ENCODE measurements at regions of chr11 and their contacts with region 1.

Region 1: GRCh38 chr11:115334932-115335788 is 169.1 kb downstream of the CADM1 start:
- DNase-seq: peak; percentile 52
- ATAC-seq: peak; percentile 57
- H3K4me3 ChIP-seq: no peak overlapping the region
- H3K27ac ChIP-seq: no peak overlapping the region
- H3K4me1 ChIP-seq: no peaks in the 10 kb centered on the region
- H3K27me3 ChIP-seq: no peaks in the 10 kb centered on the region
- CTCF ChIP-seq: peak; percentile 73
- POLR2A ChIP-seq: no peak
- RAD21 ChIP-seq: peak; percentile 76

Region 2: GRCh38 chr11:115300660-115301428 is 34.3 kb before region 1 on chr11:
- CTCF ChIA-PET with region 1: no interaction called
- POLR2A ChIA-PET with region 1: no interaction called
- dilution Hi-C with region 1: no loop called
- in situ Hi-C with region 1: no loop called
- intact Hi-C with region 1: no loop called
- DNase-seq: peak; percentile 73
- ATAC-seq: peak; percentile 90
- H3K4me3 ChIP-seq: no peak overlapping the region
- H3K27ac ChIP-seq: no peak overlapping the region
- H3K4me1 ChIP-seq: peaks cover 2% of the 10 kb centered on the region; the same call in 1 of the 2 replicates
- H3K27me3 ChIP-seq: no peaks in the 10 kb centered on the region
- CTCF ChIP-seq: no peak
- POLR2A ChIP-seq: no peak
- RAD21 ChIP-seq: no peak; the same call in 1 of the 2 replicates

Region 3: DNA sequence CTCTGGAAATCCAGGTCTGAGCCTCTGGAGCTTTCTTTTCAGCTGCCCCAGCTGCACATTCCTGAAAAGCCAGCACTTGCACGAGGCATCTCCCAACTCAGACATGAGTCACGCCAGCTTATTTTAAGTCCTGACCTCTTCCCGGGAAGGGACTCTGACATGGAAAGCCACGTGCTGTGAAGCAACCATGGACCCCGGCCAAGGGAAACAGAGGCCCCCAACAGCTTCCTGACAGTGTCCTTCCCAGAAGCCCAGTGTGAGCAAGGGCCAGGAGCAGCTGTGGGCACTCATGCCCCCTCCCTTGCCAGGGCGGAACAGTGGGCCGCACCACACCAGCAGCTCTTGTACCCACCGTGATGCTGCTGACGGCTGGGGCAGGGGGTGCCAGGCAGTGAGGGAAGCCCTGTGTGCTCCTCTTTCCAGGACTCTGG is 287.9 kb after region 1 on chr11:
- CTCF ChIA-PET with region 1: no interaction called
- POLR2A ChIA-PET with region 1: no interaction called
- dilution Hi-C with region 1: no loop called
- in situ Hi-C with region 1: no loop called
- intact Hi-C with region 1: loop called (anchors 5 kb)
- DNase-seq: peak; percentile 100
- ATAC-seq: peak; percentile 87
- H3K4me3 ChIP-seq: no peak overlapping the region
- H3K27ac ChIP-seq: peak overlapping the region; percentile 66
- H3K4me1 ChIP-seq: peaks cover 17% of the 10 kb centered on the region
- H3K27me3 ChIP-seq: peaks cover 3% of the 10 kb centered on the region
- CTCF ChIP-seq: no peak
- POLR2A ChIP-seq: no peak
- RAD21 ChIP-seq: 0 out of 2 replicates have a peak, but pooled peaks have one; percentile 23

Region 4: GRCh38 chr11:115672999-115673411 is 337.8 kb after region 1 on chr11:
- CTCF ChIA-PET with region 1: no interaction called
- POLR2A ChIA-PET with region 1: no interaction called
- dilution Hi-C with region 1: no loop called
- in situ Hi-C with region 1: no loop called
- intact Hi-C with region 1: loop called (anchors 10 kb)
- DNase-seq: peak; percentile 73
- ATAC-seq: peak; percentile 34; the same call in 1 of the 2 replicates
- H3K4me3 ChIP-seq: no peak overlapping the region
- H3K27ac ChIP-seq: no peak overlapping the region
- H3K4me1 ChIP-seq: peaks cover 21% of the 10 kb centered on the region
- H3K27me3 ChIP-seq: no peaks in the 10 kb centered on the region
- CTCF ChIP-seq: no peak
- POLR2A ChIP-seq: no peak
- RAD21 ChIP-seq: no peak

Region 5: GRCh38 chr11:115869780-115870431 is 534.7 kb after region 1 on chr11:
- CTCF ChIA-PET with region 1: no interaction called
- POLR2A ChIA-PET with region 1: no interaction called
- dilution Hi-C with region 1: no loop called
- in situ Hi-C with region 1: no loop called
- intact Hi-C with region 1: loop called (anchors 10 kb)
- DNase-seq: peak; percentile 51
- ATAC-seq: peak; percentile 94
- H3K4me3 ChIP-seq: no peak overlapping the region
- H3K27ac ChIP-seq: no peak overlapping the region
- H3K4me1 ChIP-seq: no peaks in the 10 kb centered on the region; the same call in 1 of the 2 replicates
- H3K27me3 ChIP-seq: no peaks in the 10 kb centered on the region; the same call in 1 of the 2 replicates
- CTCF ChIP-seq: peak; percentile 61
- POLR2A ChIP-seq: no peak
- RAD21 ChIP-seq: peak; percentile 73

Region 6: DNA sequence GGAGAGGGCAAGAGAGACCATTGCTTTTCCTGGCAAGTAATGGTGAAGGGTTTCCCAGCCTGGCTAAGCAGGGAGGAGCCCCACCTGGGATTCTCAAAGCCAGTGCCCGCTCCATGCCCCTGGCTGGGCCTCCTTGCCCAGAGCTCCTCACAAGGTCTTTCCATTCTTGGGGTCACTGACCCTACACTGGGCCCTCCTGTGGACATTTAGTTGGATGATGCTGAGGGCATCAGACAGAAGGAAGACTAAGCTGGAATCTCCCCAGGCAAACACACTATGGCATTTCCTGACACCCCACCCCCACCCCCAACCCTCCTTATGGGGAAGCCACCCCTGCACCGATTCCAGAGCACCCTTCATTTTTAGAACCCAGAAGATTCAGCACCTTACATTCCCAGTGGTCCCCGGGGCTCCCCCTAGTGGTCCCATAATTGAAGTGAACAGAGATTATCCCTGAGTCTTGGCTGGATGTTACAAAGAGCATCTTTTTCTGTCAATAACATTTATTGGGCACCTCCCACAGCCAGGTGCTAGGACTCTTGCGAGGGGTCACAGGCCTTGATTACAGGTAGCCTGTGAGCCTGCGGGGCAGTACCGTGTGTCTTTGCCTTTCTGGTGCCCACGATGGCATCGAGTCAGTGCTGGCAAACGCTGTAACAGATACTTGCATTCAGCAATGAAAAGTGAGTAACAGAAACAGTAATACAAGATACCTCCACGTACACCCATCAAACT is 889.2 kb after region 1 on chr11:
- CTCF ChIA-PET with region 1: no interaction called
- POLR2A ChIA-PET with region 1: no interaction called
- dilution Hi-C with region 1: no loop called
- in situ Hi-C with region 1: no loop called
- intact Hi-C with region 1: loop called (anchors 1 kb)
- DNase-seq: peak; percentile 22
- ATAC-seq: peak; percentile 87
- H3K4me3 ChIP-seq: no peak overlapping the region
- H3K27ac ChIP-seq: no peak overlapping the region
- H3K4me1 ChIP-seq: no peaks in the 10 kb centered on the region
- H3K27me3 ChIP-seq: no peaks in the 10 kb centered on the region
- CTCF ChIP-seq: peak; percentile 60
- POLR2A ChIP-seq: no peak
- RAD21 ChIP-seq: peak; percentile 53

Region 7: DNA sequence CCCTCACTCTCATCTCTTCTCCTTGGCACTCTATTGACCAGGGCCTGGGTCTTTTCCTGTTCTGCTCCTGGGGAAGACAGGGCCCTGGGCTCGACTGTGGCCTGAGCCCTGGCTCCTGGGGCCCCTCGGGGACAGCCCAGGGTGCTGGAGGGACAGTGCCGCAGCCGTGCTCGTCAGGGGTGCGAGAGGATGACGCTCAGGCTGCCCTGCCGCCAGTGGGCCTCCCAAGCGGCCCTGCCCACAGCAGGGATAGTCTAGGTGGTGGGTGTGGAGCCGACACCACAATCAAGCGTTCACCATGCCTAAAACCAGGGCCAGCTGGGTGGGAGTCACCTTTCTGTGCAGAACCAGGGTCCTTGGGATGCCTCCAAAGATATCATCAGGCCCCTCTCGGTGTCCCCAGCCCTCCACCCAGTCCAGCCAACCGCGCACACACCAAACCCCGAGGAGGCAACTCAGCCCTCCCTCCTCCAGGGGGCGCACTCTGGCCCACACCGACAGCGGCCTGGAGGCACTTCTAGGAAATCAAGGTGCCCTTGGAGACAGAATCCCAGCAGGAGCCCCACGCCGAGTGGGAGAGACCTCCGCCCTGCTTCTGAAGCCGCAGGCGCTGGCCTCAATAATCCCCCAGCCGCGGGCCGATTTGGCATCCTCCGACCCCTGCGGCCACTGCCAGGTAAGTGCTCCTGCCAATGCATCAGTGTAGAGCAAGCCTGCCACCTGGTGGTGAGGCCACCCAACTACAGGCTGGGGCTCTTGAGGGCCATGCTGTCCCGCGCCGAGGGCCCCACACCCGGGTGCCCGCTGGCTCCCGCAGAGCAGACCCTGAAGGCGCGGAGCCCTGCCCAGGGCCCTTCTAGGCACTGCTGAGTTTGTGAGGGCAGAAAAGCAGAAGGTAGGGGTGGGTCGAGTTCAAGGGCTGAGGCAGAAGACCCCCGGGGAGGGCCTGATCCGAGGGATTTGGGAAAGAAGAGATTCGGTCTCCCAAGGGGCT is 941.2 kb after region 1 on chr11:
- CTCF ChIA-PET with region 1: no interaction called
- POLR2A ChIA-PET with region 1: no interaction called
- dilution Hi-C with region 1: no loop called
- in situ Hi-C with region 1: no loop called
- intact Hi-C with region 1: loop called (anchors 2 kb)
- DNase-seq: peak; percentile 30
- ATAC-seq: peak; percentile 60; the same call in 1 of the 2 replicates
- H3K4me3 ChIP-seq: no peak overlapping the region
- H3K27ac ChIP-seq: no peak overlapping the region
- H3K4me1 ChIP-seq: no peaks in the 10 kb centered on the region
- H3K27me3 ChIP-seq: no peaks in the 10 kb centered on the region; the same call in 1 of the 2 replicates
- CTCF ChIP-seq: peak; percentile 63
- POLR2A ChIP-seq: no peak
- RAD21 ChIP-seq: peak; percentile 74

Measured in IMR-90 (cell line).